Activated T-helper 1 cell treated with anti-CD3 and anti-CD28 coated beads, Interleukin-12 subunit alpha, Interleukin-12 subunit beta, Interleukin-2, Interleukin-4 antibody, amounts not matched to agents 30 ng/mL and 10 ng/mL and 1 ng/mL, durations not matched to agents 14 hours and 24 hours and 36 hours (primary cell): ENCODE measurements at regions of chr5 and their contacts with region 1.

Region 1: GRCh38 chr5:109479260-109479860 is 69.6 kb upstream of the PJA2 start:
- DNase-seq: no peak
- H3K4me3 Mint-ChIP-seq: no peak overlapping the region
- H3K27ac Mint-ChIP-seq: no peak overlapping the region
- H3K4me1 Mint-ChIP-seq: no peaks in the 10 kb centered on the region
- H3K27me3 Mint-ChIP-seq: peaks cover 2% of the 10 kb centered on the region

Region 2: GRCh38 chr5:108521841-108522506 is 957.4 kb before region 1 on chr5:
- intact Hi-C with region 1: loop called (anchors 5 kb)
- DNase-seq: no peak
- H3K4me3 Mint-ChIP-seq: no peak overlapping the region
- H3K27ac Mint-ChIP-seq: no peak overlapping the region
- H3K4me1 Mint-ChIP-seq: no peaks in the 10 kb centered on the region
- H3K27me3 Mint-ChIP-seq: peaks cover 3% of the 10 kb centered on the region

Region 3: GRCh38 chr5:108642167-108642906 is 837.0 kb before region 1 on chr5:
- intact Hi-C with region 1: loop called (anchors 2 kb)
- DNase-seq: peak; percentile 11
- H3K4me3 Mint-ChIP-seq: no peak overlapping the region
- H3K27ac Mint-ChIP-seq: no peak overlapping the region
- H3K4me1 Mint-ChIP-seq: peaks cover 5% of the 10 kb centered on the region
- H3K27me3 Mint-ChIP-seq: peaks cover 7% of the 10 kb centered on the region